Activated B cell treated with CpG ODN at 0.5 μM for 24 hours (primary cell): ENCODE measurements at regions of chr18 and their contacts with region 1.

Region 1: GRCh38 chr18:53191634-53192033 is 851.6 kb downstream of the DCC start:
- DNase-seq: no peak
- ATAC-seq: no peak
- H3K4me3 Mint-ChIP-seq: no peak overlapping the region
- H3K27ac Mint-ChIP-seq: no peak overlapping the region
- H3K4me1 Mint-ChIP-seq: no peaks in the 10 kb centered on the region
- H3K27me3 Mint-ChIP-seq: no peaks in the 10 kb centered on the region
- CTCF ChIP-seq: no peak

Region 2: DNA sequence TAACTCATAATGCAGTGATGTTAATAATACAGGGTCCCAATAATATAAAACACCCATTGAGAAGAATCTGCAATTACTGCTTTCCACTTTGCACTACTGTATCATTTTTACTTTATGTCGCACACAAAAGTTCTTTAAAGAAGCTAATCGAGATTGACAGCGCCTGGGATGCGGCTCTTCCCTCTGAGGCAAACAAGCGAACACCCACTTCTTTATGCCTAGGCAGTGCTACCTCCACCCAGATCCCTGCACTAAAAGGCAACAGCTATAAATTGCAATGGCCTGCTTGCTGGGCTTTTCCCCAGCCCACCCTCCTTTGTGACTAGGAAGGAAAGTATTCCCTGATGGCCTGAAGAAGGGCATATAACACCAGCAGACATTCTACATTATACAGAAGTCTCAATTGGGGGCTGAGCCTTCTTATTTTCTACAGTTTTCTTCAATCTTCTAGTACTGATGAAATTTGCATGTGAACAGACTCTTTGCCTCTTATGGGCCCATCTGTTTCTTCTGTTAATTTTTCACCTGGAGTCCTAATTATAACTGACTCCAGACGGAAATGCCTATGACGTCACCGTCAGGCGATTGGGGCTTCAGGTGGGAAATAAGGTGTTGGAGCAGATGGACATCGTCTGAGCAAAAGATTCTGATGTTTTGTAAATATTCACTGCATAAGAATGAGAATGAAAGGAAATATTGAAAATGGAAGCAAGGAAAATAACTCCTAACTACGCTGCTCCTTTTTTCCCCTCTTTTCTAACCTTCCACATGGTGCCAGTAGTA is 990.6 kb before region 1 on chr18:
- CTCF ChIA-PET with region 1: no interaction called
- POLR2A ChIA-PET with region 1: no interaction called
- intact Hi-C with region 1: no loop called
- DNase-seq: no peak
- ATAC-seq: no peak
- H3K4me3 Mint-ChIP-seq: no peak overlapping the region
- H3K27ac Mint-ChIP-seq: no peak overlapping the region
- H3K4me1 Mint-ChIP-seq: no peaks in the 10 kb centered on the region
- H3K27me3 Mint-ChIP-seq: no peaks in the 10 kb centered on the region
- CTCF ChIP-seq: no peak

Region 3: GRCh38 chr18:53253789-53254188 is 62.2 kb after region 1 on chr18:
- CTCF ChIA-PET with region 1: no interaction called
- POLR2A ChIA-PET with region 1: no interaction called
- intact Hi-C with region 1: loop called (anchors 10 kb)
- DNase-seq: no peak
- ATAC-seq: no peak
- H3K4me3 Mint-ChIP-seq: no peak overlapping the region
- H3K27ac Mint-ChIP-seq: no peak overlapping the region
- H3K4me1 Mint-ChIP-seq: no peaks in the 10 kb centered on the region
- H3K27me3 Mint-ChIP-seq: no peaks in the 10 kb centered on the region
- CTCF ChIP-seq: no peak